ENCODE measurements at regions of chr21 and their contacts with region 1.

Region 1: GRCh38 chr21:33924079-33924765 is 8.6 kb upstream of the ATP5PO start:
- DNase-seq: peak; percentile 90
- ATAC-seq: peak; percentile 96
- H3K4me3 ChIP-seq: no peak overlapping the region
- H3K27ac ChIP-seq: no peak overlapping the region
- H3K4me1 ChIP-seq: peaks cover 11% of the 10 kb centered on the region
- H3K27me3 ChIP-seq: no peaks in the 10 kb centered on the region
- CTCF ChIP-seq: peak; percentile 96

Region 2: DNA sequence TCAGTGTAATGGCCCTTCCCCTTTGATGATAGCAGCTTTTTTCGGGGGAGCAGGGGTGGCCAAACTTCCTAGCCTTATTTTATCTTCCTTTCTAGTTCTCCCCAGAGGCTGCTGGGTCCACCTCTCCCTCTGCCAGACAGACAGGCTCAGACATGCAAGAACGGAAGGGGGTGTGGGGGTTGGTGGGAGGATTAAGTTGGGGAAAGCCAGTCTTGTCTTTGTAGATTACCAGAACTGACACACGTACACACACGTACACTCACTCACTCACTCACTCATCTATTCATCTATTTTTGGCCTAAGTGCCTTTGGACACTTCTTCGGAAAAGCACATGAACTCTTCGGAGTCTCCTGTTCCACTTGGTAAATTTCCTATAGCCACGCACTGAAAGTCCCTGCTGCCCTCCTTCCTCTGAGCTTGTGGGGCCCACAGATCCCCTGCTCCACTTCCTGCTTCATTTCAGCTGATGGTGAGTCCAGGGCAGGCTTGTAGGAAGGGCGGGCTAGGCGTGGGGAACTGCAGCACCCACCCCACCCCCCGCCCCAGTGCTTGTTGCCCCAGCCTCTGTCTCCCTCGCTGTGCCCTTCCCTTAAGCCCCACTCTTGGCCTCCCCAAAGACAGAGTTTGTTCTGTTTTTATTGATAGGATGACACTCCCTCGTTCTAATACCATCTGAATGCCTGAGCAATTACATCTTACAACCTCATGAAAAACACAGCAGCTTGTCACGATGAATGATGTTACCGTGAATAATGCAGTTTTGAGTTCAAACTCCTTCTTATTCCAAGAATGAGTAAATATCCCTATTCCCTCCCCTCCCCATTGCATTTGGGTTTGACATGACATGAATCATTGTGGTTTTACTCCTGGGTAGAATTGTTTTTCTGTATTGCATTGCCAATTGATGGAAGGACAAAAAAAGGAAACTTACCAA is 52.1 kb after region 1 on chr21:
- CTCF ChIA-PET with region 1: interaction called, 4 read pairs
- POLR2A ChIA-PET with region 1: no interaction called
- intact Hi-C with region 1: loop called (anchors 2 kb)
- DNase-seq: peak; percentile 98
- ATAC-seq: peak; percentile 76
- H3K4me3 ChIP-seq: peak overlapping the region; percentile 44
- H3K27ac ChIP-seq: peak overlapping the region; percentile 98
- H3K4me1 ChIP-seq: peaks cover 48% of the 10 kb centered on the region
- H3K27me3 ChIP-seq: no peaks in the 10 kb centered on the region
- CTCF ChIP-seq: no peak

Region 3: GRCh38 chr21:34202553-34203372 is 278.5 kb after region 1 on chr21:
- CTCF ChIA-PET with region 1: interaction called, 12 read pairs
- POLR2A ChIA-PET with region 1: no interaction called
- intact Hi-C with region 1: loop called (anchors 2 kb)
- DNase-seq: no peak
- ATAC-seq: no peak
- H3K4me3 ChIP-seq: peak overlapping the region; percentile 56
- H3K27ac ChIP-seq: no peak overlapping the region
- H3K4me1 ChIP-seq: peaks cover 17% of the 10 kb centered on the region
- H3K27me3 ChIP-seq: no peaks in the 10 kb centered on the region
- CTCF ChIP-seq: no peak

Region 4: GRCh38 chr21:34261841-34262468 is 337.7 kb after region 1 on chr21:
- CTCF ChIA-PET with region 1: interaction called, 10 read pairs
- POLR2A ChIA-PET with region 1: no interaction called
- intact Hi-C with region 1: no loop called
- DNase-seq: no peak
- ATAC-seq: no peak
- H3K4me3 ChIP-seq: no peak overlapping the region
- H3K27ac ChIP-seq: no peak overlapping the region
- H3K4me1 ChIP-seq: no peaks in the 10 kb centered on the region
- H3K27me3 ChIP-seq: peaks cover 23% of the 10 kb centered on the region
- CTCF ChIP-seq: no peak